Cardiac septum (tissue), 1 donor: ENCODE measurements at regions of chr7 and their contacts with region 1.

Region 1: DNA sequence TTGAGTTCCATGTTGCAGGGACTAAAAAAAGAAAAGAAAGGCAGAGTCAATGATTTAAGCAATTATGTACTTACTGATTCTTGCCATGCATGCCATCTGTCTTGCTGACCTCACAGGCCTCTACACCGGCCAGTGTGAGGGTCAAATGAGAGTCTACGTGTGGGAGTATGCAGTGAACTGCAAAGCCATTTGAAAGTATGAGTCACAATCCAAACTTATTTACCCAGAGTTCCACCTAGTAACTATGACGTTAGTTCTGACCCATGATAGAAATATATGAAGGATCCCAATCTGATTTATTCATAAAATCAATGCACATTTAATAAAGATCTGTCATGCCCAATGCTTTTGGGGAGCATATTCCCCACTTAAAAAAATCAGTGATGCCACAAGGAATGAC is 26.5 kb downstream of the PDE1C start:
- DNase-seq: no peak

Region 2: GRCh38 chr7:31782411-31782991 is 261.2 kb before region 1 on chr7:
- intact Hi-C with region 1: loop called (anchors 10 kb)
- DNase-seq: no peak

Region 3: GRCh38 chr7:32115831-32116230 is 72.1 kb after region 1 on chr7:
- intact Hi-C with region 1: no loop called
- DNase-seq: no peak